ENCODE measurements at regions of chr9 and their contacts with region 1.

Region 1: GRCh38 chr9:117247266-117247665 is 167.6 kb downstream of the ASTN2 start:
- DNase-seq: no peak
- H3K4me3 ChIP-seq: no peak overlapping the region
- H3K27ac ChIP-seq: no peak overlapping the region
- H3K4me1 ChIP-seq: no peaks in the 10 kb centered on the region
- H3K27me3 ChIP-seq: no peaks in the 10 kb centered on the region
- CTCF ChIP-seq: peak in 2 of 3 experiments; percentile 47 to 63; a peak in 3 of 4 replicates
- EP300 ChIP-seq: no peak
- POLR2A ChIP-seq: no peak
- RAD21 ChIP-seq: peak; percentile 63 to 74

Region 2: GRCh38 chr9:117218951-117219350 is 28.3 kb before region 1 on chr9:
- CTCF ChIA-PET with region 1: interaction called, 10 read pairs
- POLR2A ChIA-PET with region 1: no interaction called
- DNase-seq: no peak
- H3K4me3 ChIP-seq: no peak overlapping the region
- H3K27ac ChIP-seq: no peak overlapping the region
- H3K4me1 ChIP-seq: no peaks in the 10 kb centered on the region
- H3K27me3 ChIP-seq: no peaks in the 10 kb centered on the region
- CTCF ChIP-seq: no peak
- EP300 ChIP-seq: no peak
- POLR2A ChIP-seq: no peak
- RAD21 ChIP-seq: no peak

Region 3: GRCh38 chr9:117258184-117258866 is 11.1 kb after region 1 on chr9:
- CTCF ChIA-PET with region 1: interaction called, 16 read pairs
- POLR2A ChIA-PET with region 1: no interaction called
- DNase-seq: no peak
- H3K4me3 ChIP-seq: no peak overlapping the region
- H3K27ac ChIP-seq: no peak overlapping the region
- H3K4me1 ChIP-seq: peaks cover 2 to 6% (median 3%) of the 10 kb centered on the region in 4 experiments; a peak in 4 of 7 replicates
- H3K27me3 ChIP-seq: no peaks in the 10 kb centered on the region
- CTCF ChIP-seq: no peak
- EP300 ChIP-seq: no peak
- POLR2A ChIP-seq: no peak
- RAD21 ChIP-seq: no peak

Region 4: DNA sequence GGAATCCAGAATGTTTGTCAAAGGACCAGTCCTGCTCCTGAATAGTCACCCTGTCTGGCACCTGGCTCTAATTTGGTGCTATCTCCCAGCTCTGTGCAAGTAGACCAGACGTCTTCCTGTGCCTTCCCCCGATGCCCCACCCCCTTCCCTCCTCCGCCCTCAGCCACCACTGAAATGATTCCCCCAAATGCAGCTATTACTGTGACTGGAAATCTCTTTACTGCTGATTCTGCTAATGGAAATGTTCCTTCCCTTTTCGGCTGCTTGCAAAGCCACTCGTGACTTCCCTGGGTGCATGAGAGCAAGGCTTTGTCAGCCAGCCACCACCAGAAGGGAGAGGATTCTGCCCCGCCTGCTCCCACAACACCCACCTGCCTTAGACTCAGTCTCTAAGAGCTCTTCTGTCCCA is 156.1 kb after region 1 on chr9:
- CTCF ChIA-PET with region 1: interaction called, 11 read pairs
- POLR2A ChIA-PET with region 1: no interaction called
- DNase-seq: no peak
- H3K4me3 ChIP-seq: no peak overlapping the region
- H3K27ac ChIP-seq: no peak overlapping the region
- H3K4me1 ChIP-seq: peaks cover 2 to 32% (median 14%) of the 10 kb centered on the region in 4 experiments; a peak in 6 of 7 replicates
- H3K27me3 ChIP-seq: no peaks in the 10 kb centered on the region
- CTCF ChIP-seq: no peak
- EP300 ChIP-seq: no peak
- POLR2A ChIP-seq: no peak
- RAD21 ChIP-seq: no peak

Measured in H1 (cell line).